ENCODE measurements at regions of chr1 and their contacts with region 1.

Region 1: DNA sequence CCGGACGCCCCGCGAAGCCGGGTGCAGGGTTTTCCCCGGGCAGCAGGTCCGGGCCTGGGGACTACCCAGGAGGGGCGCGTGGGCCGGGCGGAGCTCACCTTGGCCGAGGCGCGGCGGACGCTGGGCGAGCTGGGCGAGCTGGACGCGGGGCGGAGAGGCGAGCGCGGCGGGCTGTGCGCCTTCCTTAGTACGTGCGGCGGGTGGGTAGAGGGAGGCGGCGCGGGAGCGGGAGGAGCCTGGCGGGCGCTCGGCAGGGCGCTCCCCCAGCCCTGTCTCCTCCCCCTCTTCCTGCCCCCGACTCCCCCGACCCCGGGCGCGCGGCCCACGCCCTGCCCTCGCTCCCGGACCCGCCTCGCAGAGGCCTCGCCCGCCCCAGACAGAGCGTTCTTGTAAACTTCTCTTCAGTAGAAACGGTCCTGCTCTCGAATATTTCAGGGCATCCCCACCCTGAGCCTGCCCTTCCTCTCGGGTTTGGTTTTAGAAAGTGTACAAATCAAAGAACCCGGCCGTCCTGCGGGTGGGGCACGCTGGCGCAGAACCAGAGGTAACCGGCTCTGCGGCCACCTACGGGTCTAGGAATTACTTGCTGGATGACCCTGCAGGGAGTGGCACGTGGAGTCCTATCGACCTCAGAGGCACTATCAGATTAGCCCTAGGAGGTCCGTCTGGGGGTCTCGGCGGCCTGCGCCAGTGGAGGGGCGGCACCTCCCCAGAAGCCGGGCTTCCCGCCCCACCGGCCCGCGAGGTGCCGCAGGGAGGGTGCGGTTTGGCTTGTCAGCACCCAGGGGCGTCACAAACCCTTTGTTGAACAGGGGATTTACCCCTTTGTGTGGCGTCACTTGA is at the start of gene S100A10:
- DNase-seq: peak; percentile 91
- H3K4me3 ChIP-seq: peak within 1 kb of the TSS; percentile 63 to 84 (median 68)
- H3K27ac ChIP-seq: peak within 1 kb of the TSS; percentile 93 to 97 (median 94)
- H3K4me1 ChIP-seq: peaks cover 33 to 60% (median 49%) of the 10 kb centered on the region in 4 donors
- H3K27me3 ChIP-seq: no peaks in the 10 kb centered on the region
- CTCF ChIP-seq: peak in 2 of 5 experiments; percentile 14 to 31
- EP300 ChIP-seq: no peak
- POLR2A ChIP-seq: peak; percentile 90
- total RNA-seq, gene S100A10: 59.1 to 289 (median 251) TPM

Region 2: DNA sequence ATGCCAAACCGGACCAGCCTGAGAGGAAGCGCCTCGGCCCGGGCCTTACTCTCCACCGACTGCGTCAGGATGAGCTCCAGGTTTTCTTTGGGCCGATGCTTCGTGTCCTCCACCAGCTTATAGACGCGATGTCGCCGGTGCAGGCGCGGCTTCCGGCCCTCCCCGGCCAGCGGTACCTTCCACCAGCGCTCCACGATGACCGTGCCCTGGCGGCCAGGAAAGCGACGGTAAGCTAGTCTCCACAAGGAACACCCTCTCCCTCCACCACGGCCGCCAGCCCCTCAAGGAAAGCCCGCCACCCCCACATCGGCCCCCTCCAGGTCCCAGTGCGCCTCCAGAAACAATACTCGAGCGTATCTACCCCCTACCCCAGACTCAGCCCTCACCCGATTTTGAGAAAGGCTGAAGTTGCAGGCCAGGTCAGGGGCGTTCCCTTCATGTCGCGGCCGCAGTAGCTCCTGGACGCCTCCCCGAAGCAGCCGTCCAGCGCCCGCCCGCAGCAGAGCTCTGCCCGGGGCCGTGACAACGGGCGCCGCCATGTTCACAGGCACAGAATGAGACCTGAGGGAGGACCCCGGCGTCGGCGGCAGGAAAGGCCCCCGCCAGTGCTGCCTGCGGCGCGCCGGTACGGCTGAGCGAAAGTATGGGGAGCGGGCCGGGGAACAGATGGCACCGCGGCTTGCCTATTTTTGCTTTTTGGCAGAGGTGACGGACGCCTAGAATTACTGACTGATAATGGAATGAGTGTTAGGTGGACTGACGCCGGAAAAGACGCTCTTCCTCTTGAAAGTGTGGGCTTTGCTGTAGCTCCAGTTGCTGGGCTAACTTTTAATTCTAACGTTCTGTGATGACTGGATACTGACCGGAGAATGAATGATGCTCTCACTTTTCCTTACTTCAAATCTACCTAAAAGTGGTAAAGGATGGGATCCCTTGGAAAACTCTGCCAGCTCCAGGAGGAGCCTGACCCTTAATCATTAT is 230.6 kb before region 1 on chr1 and contains the start of gene MRPL9:
- in situ Hi-C with region 1: no loop called
- intact Hi-C with region 1: no loop called
- DNase-seq: peak; percentile 84
- H3K4me3 ChIP-seq: peak within 1 kb of the TSS; percentile 67 to 80 (median 76)
- H3K27ac ChIP-seq: peak within 1 kb of the TSS; percentile 87 to 90 (median 88)
- H3K4me1 ChIP-seq: peaks cover 6 to 17% (median 14%) of the 10 kb centered on the region in 4 donors
- H3K27me3 ChIP-seq: no peaks in the 10 kb centered on the region
- CTCF ChIP-seq: no peak
- EP300 ChIP-seq: no peak
- POLR2A ChIP-seq: peak; percentile 68
- total RNA-seq, gene MRPL9: 20.2 to 138 (median 40.1) TPM

Region 3: DNA sequence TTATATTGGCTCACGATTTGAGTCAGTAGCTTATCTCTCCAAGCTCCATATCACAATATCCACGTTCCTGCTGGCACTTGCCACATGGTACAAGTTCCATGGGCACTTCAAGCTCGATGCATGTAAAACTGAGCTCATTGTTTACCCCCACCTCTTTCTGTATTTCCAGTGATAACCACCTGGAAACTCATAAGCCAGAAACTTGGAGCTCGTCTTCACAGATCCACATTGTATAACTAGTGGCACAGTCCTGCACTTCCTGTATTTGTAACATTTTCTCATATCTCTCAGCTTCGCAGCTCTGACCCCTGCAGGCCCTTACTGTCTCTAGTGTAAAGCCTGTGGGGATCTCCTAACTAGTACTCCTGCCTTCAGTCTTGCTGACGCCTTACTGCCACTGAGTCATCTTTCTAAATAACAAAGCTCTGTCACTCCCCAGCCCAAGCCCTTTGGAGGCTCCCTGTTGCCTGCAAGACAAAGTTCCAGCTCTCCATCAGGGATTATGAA is 147.8 kb before region 1 on chr1:
- in situ Hi-C with region 1: no loop called
- intact Hi-C with region 1: no loop called
- DNase-seq: no peak
- H3K4me3 ChIP-seq: no peak overlapping the region
- H3K27ac ChIP-seq: no peak overlapping the region
- H3K4me1 ChIP-seq: no peaks in the 10 kb centered on the region
- H3K27me3 ChIP-seq: peaks cover 14% of the 10 kb centered on the region
- CTCF ChIP-seq: no peak
- EP300 ChIP-seq: no peak
- POLR2A ChIP-seq: no peak

Region 4: DNA sequence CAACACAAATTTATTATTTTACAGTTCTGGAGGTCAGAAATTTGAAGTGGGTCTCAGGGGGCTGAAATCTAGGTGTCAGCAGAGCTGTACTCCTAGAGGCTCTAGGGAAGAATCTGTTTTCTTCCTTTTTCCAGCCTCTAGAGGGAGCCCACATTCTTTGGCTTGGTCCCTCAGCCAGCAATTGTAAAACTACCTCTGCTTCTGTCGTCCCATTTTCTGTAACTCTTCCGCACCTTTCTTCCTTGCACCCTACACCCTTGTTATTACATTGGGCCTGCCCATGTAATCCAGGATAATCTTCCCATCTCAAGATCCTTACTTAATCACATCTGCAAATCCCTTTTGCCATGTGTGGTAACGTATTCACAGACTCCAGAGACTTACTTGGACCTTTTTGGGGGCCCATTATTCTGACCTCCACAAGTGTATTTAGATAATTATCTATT is 59.8 kb before region 1 on chr1:
- in situ Hi-C with region 1: loop called in 2 of 4 experiments (anchors 5 kb)
- intact Hi-C with region 1: loop called (anchors 2 kb)
- DNase-seq: peak; percentile 47
- H3K4me3 ChIP-seq: no peak overlapping the region
- H3K27ac ChIP-seq: peak overlapping the region in 1 of 4 donors; percentile 26
- H3K4me1 ChIP-seq: peaks cover 0 to 27% (median 7%) of the 10 kb centered on the region in 4 donors
- H3K27me3 ChIP-seq: no peaks in the 10 kb centered on the region
- CTCF ChIP-seq: peak; percentile 79 to 88 (median 85)
- EP300 ChIP-seq: no peak
- POLR2A ChIP-seq: no peak

Region 5: GRCh38 chr1:152052606-152053005 is 58.7 kb after region 1 on chr1:
- in situ Hi-C with region 1: no loop called
- intact Hi-C with region 1: no loop called
- DNase-seq: peak; percentile 88
- H3K4me3 ChIP-seq: no peak overlapping the region
- H3K27ac ChIP-seq: no peak overlapping the region
- H3K4me1 ChIP-seq: peaks cover 11 to 14% (median 13%) of the 10 kb centered on the region in 4 donors
- H3K27me3 ChIP-seq: peaks cover 45% of the 10 kb centered on the region
- CTCF ChIP-seq: peak; percentile 89 to 93 (median 91)
- EP300 ChIP-seq: no peak
- POLR2A ChIP-seq: no peak

Region 6: GRCh38 chr1:152127670-152128069 is 133.8 kb after region 1 on chr1:
- in situ Hi-C with region 1: no loop called
- intact Hi-C with region 1: no loop called
- DNase-seq: no peak
- H3K4me3 ChIP-seq: no peak overlapping the region
- H3K27ac ChIP-seq: no peak overlapping the region
- H3K4me1 ChIP-seq: no peaks in the 10 kb centered on the region
- H3K27me3 ChIP-seq: peaks cover 52% of the 10 kb centered on the region
- CTCF ChIP-seq: no peak
- EP300 ChIP-seq: no peak
- POLR2A ChIP-seq: no peak